GM12878 (cell line): ENCODE measurements at regions of chr22 and their contacts with region 1.

Region 1: DNA sequence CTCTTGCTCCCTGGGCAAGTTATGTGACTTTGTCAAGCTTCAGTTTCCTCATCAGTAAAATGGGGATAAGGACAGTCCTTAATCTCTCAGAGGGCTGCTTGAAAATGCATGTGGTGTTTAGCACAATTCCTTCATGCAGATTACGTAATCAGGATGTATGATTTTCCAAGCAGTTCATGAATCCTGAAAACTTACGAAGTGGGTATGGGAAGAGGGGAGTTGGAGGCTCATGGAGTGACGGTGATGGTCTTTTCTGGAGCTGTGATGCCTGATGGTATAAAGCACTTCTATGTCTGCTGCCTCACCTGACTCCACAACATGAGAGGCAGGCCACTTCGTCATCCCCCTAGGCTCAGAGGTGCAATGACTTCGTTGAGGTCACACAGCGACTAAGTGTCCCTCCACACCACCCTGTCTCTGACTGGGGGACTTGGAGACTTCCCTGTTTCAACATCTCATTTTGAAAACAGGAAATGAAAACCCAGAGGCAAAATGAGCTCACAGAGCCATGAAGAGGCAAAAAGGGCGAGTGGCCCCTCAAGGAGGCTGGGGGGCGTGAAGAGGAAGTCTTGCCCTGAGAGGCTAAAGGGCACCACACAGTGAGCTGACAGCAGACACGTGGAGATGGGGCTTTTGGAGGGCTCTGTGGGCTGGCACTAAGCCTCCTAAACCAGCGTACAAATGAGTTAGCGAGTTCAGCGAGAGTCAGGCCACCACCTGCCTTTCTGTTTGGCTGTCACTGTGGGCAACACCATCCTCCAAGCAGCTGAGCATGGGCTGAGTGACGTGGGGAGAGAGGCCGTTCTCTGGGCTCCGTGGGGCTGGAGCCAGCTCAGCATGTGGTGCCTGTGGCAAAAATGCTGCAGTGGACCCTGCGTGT is 10.1 kb downstream of the MCM5 start:
- DNase-seq: peak; percentile 91
- ATAC-seq: peak; percentile 91
- H3K4me3 ChIP-seq: peak overlapping the region; percentile 45; the same call in 1 of the 2 replicates
- H3K27ac ChIP-seq: peak overlapping the region; percentile 83
- H3K4me1 ChIP-seq: peaks cover 27% of the 10 kb centered on the region
- H3K27me3 ChIP-seq: no peaks in the 10 kb centered on the region
- CTCF ChIP-seq: no peak
- EP300 ChIP-seq: peak; percentile 53 to 76; a peak in 3 of 4 replicates
- POLR2A ChIP-seq: peak; percentile 65
- RAD21 ChIP-seq: peak; percentile 22; the same call in 1 of the 2 replicates

Region 2: GRCh38 chr22:35306350-35306967 is 103.6 kb before region 1 on chr22:
- CTCF ChIA-PET with region 1: interaction called, 4 read pairs
- POLR2A ChIA-PET with region 1: interaction called, 4 read pairs
- RAD21 ChIA-PET with region 1: interaction called, 15 read pairs
- SMC1A ChIA-PET with region 1: interaction called, 5 read pairs
- in situ Hi-C with region 1: no loop called
- intact Hi-C with region 1: no loop called
- DNase-seq: no peak
- ATAC-seq: 0 out of 3 replicates have a peak, but pooled peaks have one; percentile 1
- H3K4me3 ChIP-seq: no peak overlapping the region
- H3K27ac ChIP-seq: peak overlapping the region; percentile 7; the same call in 1 of the 2 replicates
- H3K4me1 ChIP-seq: peaks cover 46% of the 10 kb centered on the region
- H3K27me3 ChIP-seq: no peaks in the 10 kb centered on the region
- CTCF ChIP-seq: no peak
- EP300 ChIP-seq: no peak
- POLR2A ChIP-seq: no peak
- RAD21 ChIP-seq: no peak

Region 3: DNA sequence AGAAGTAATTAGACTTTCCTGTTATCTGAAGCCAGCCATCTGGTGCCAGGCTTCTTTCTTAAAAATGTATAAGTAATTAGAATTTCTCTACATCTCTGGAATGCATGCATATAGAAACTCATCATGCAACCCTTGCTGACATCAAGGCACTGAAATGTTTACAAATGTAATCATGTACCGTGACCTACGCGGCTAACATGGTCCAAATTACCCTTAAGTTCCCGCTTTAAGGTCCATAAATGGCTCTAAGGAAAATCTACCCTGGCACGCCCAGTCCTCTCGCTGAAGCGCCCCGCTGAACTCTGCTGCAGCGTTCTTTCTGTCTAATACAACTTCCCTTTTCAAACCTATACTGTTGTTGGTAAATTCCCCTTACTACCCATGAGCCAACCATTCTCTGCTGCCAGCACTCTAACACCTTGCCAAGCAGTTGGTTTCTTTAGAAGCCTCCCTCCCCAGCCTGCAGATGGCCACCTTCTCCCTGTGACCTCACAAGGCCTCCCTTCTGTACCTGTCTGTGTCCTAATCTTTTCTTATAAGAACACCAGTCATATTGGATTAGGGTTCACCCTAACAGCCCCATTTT is 42.6 kb before region 1 on chr22:
- CTCF ChIA-PET with region 1: interaction called, 36 read pairs
- POLR2A ChIA-PET with region 1: interaction called, 13 read pairs
- RAD21 ChIA-PET with region 1: interaction called, 38 read pairs
- SMC1A ChIA-PET with region 1: interaction called, 28 read pairs
- in situ Hi-C with region 1: no loop called
- intact Hi-C with region 1: loop called (anchors 1 kb)
- DNase-seq: peak; percentile 65
- ATAC-seq: peak; percentile 90
- H3K4me3 ChIP-seq: no peak overlapping the region
- H3K27ac ChIP-seq: no peak overlapping the region
- H3K4me1 ChIP-seq: peaks cover 19% of the 10 kb centered on the region
- H3K27me3 ChIP-seq: no peaks in the 10 kb centered on the region
- CTCF ChIP-seq: peak in 2 of 3 experiments; percentile 7 to 42; a peak in 2 of 6 replicates
- EP300 ChIP-seq: no peak
- POLR2A ChIP-seq: no peak
- RAD21 ChIP-seq: no peak

Region 4: DNA sequence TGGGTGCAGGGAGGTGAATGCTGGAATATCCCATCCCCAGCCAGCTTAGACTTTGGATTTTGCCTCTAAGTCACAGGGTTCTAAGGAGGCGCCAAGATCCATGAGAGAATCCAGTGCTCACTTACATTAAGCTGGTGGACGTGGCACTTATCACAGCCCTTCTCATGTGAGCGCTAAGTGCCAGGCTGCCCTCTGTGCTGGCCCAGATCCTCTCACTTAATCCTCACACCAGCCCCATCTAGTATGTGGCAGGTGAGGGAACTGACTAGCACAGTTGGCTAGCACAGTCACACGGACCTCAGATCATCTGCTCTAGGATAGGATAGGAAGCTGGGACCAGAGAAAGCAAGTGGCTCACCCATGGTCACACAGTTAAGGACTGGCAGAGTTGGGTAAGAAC is 25.5 kb before region 1 on chr22:
- CTCF ChIA-PET with region 1: interaction called, 16 read pairs
- POLR2A ChIA-PET with region 1: interaction called, 18 read pairs
- RAD21 ChIA-PET with region 1: interaction called, 39 read pairs
- SMC1A ChIA-PET with region 1: interaction called, 11 read pairs
- in situ Hi-C with region 1: no loop called
- intact Hi-C with region 1: no loop called
- DNase-seq: no peak
- ATAC-seq: peak; percentile 33
- H3K4me3 ChIP-seq: no peak overlapping the region
- H3K27ac ChIP-seq: no peak overlapping the region
- H3K4me1 ChIP-seq: peaks cover 8% of the 10 kb centered on the region; the same call in 1 of the 2 replicates
- H3K27me3 ChIP-seq: no peaks in the 10 kb centered on the region
- CTCF ChIP-seq: no peak
- EP300 ChIP-seq: no peak
- POLR2A ChIP-seq: no peak
- RAD21 ChIP-seq: no peak

Region 5: DNA sequence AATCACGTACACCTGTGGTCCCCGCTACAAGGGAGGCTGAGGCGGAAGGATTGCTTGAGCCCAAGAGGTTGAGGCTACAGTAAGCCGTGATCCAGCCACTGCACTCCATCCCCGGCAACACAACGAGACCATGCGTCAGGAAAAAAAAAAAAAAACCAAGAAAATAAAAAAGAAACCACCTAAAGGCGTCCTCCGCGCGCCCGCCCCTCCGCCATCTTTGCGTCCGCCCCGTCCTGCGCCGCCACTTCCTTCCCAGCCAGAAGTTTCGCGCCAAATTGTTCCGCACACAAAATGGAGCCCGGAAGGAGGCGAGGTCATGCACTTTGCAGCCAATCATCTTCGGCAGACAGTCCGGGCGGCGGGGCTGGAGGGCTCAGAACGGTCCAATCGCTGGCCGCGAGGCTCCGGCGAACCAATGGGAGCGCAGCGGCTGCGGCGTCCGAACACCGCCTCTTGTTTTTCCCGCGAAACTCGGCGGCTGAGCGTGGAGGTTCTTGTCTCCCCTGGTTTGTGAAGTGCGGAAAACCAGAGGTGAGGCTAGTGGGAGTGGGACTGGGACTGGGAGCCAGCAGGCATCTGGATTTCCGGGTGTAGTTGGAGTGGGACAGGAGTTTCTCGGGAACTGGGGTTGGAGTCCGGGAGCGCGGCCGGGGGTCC is 10.2 kb before region 1 on chr22 and contains the start of gene MCM5:
- CTCF ChIA-PET with region 1: interaction called, 26 read pairs
- POLR2A ChIA-PET with region 1: interaction called, 46 read pairs
- RAD21 ChIA-PET with region 1: interaction called, 29 read pairs
- SMC1A ChIA-PET with region 1: interaction called, 79 read pairs
- in situ Hi-C with region 1: no loop called
- intact Hi-C with region 1: no loop called
- DNase-seq: peak; percentile 94
- ATAC-seq: peak; percentile 96
- H3K4me3 ChIP-seq: peak within 1 kb of the TSS; percentile 91
- H3K27ac ChIP-seq: peak within 1 kb of the TSS; percentile 90
- H3K4me1 ChIP-seq: peaks cover 32% of the 10 kb centered on the region
- H3K27me3 ChIP-seq: no peaks in the 10 kb centered on the region
- CTCF ChIP-seq: no peak
- EP300 ChIP-seq: no peak
- POLR2A ChIP-seq: peak; percentile 81
- RAD21 ChIP-seq: no peak
- polyA plus RNA-seq, gene MCM5: 14.1 to 22.1 TPM

Region 6: DNA sequence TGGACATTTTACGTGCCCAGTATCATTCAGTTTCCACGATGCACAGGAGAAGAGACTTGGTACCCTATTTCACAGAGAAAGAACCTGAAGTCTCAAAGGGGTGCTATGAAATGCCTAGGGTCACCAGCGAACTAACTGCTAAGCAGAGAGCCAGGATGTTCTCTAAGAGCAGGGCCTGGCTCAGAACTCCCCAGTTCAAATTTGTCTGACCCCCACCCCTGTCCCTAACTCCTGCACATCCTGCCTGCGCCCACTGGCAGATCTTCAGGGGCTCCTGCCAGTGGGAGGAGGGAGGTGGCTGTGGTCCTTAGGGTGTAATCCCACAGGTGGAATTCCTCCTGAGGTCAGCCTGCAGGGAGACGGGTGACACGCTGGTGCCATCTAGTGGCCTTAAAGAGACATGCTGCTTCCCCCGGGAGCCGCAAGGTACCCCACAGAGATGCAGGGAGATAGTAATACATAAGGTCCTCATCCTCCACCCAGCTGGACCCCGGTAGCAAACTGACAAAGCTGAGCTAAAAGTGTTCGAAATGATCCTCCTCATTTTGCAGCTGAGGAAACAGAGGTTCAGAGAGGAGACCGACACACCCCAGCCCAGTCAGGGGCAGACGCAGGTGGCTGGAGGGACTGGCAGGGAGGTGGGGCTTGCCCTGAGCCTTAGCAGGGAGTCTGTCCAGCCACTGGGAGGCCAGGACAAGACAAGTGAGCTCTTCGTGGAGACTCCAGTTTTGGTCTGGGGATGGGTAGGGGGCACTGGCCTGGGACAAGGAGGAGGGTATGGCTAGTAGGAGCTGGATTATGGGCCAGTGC is 173.0 kb after region 1 on chr22:
- CTCF ChIA-PET with region 1: interaction called, 10 read pairs
- POLR2A ChIA-PET with region 1: no interaction called
- RAD21 ChIA-PET with region 1: interaction called, 6 read pairs
- SMC1A ChIA-PET with region 1: interaction called, 3 read pairs
- in situ Hi-C with region 1: no loop called
- intact Hi-C with region 1: loop called (anchors 5 kb)
- DNase-seq: peak; percentile 7
- ATAC-seq: peak; percentile 93
- H3K4me3 ChIP-seq: no peak overlapping the region
- H3K27ac ChIP-seq: no peak overlapping the region
- H3K4me1 ChIP-seq: no peaks in the 10 kb centered on the region
- H3K27me3 ChIP-seq: no peaks in the 10 kb centered on the region; a peak in 1 of 4 replicates
- CTCF ChIP-seq: peak; percentile 87 to 94 (median 89)
- EP300 ChIP-seq: no peak
- POLR2A ChIP-seq: no peak
- RAD21 ChIP-seq: peak; percentile 86